ENCODE measurements at regions of chr14 and their contacts with region 1.

Region 1: DNA sequence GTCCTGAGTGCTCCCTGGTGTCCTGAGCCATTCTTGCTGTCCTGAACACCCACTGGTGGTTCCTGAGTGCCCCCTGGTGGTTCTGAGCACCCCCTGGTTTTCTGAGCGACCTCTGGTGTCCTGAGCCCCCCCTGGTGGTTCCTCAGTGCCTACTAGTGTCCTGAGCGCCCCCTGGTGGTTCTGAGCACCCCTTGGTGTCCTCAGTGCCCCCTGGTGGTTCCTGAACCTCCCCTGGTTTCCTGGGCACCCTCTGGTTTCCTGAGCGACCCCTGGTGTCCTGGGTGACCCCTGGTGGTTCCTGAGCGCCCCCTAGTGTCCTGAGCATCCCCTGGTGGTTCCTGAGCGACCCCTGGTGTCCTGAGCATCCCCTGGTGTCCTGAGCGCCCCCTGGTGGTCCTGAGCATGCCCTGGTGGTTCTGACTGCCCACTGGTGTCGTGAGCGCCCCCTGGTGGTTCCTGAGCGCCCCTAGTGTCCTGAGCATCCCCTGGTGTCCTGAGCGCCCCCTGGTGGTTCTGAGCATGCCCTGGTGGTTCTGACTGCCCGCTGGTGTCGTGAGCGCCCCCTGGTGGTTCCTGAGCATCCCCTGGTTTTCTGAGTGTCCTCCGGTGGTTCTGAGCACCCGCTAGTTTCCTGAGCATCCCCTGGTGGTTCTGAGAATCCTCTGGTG is 473.1 kb downstream of the TMEM121 start:
- DNase-seq: peak; percentile 39 to 67
- ATAC-seq: peak; percentile 36 to 80 (median 68)
- H3K4me3 ChIP-seq: no peak overlapping the region
- H3K27ac ChIP-seq: no peak overlapping the region
- H3K4me1 ChIP-seq: no peaks in the 10 kb centered on the region
- H3K27me3 ChIP-seq: no peaks in the 10 kb centered on the region
- CTCF ChIP-seq: peak; percentile 26

Region 2: GRCh38 chr14:105666420-105666819 is 333.1 kb before region 1 on chr14:
- intact Hi-C with region 1: loop called in 1 of 2 experiments (anchors 10 kb)
- DNase-seq: no peak
- ATAC-seq: no peak
- H3K4me3 ChIP-seq: no peak overlapping the region
- H3K27ac ChIP-seq: no peak overlapping the region
- H3K4me1 ChIP-seq: no peaks in the 10 kb centered on the region
- H3K27me3 ChIP-seq: no peaks in the 10 kb centered on the region
- CTCF ChIP-seq: no peak

Region 3: GRCh38 chr14:105968291-105968690 is 31.2 kb before region 1 on chr14:
- intact Hi-C with region 1: no loop called
- DNase-seq: no peak
- ATAC-seq: no peak
- H3K4me3 ChIP-seq: no peak overlapping the region
- H3K27ac ChIP-seq: no peak overlapping the region
- H3K4me1 ChIP-seq: no peaks in the 10 kb centered on the region
- H3K27me3 ChIP-seq: peaks cover 0 to 2% (median 0%) of the 10 kb centered on the region in 3 donors
- CTCF ChIP-seq: no peak

Measured in psoas muscle (tissue), 8 donors.